ENCODE measurements at regions of chr16 and their contacts with region 1.

Region 1: GRCh38 chr16:21554795-21555585 is 44.4 kb upstream of the METTL9 start:
- DNase-seq: peak; percentile 78 to 87
- H3K4me3 ChIP-seq: no peak overlapping the region
- H3K27ac ChIP-seq: no peak overlapping the region
- H3K4me1 ChIP-seq: peaks cover 0 to 8% of the 10 kb centered on the region in 2 donors
- H3K27me3 ChIP-seq: no peaks in the 10 kb centered on the region
- CTCF ChIP-seq: peak; percentile 91 to 100 (median 98)
- POLR2A ChIP-seq: no peak

Region 2: DNA sequence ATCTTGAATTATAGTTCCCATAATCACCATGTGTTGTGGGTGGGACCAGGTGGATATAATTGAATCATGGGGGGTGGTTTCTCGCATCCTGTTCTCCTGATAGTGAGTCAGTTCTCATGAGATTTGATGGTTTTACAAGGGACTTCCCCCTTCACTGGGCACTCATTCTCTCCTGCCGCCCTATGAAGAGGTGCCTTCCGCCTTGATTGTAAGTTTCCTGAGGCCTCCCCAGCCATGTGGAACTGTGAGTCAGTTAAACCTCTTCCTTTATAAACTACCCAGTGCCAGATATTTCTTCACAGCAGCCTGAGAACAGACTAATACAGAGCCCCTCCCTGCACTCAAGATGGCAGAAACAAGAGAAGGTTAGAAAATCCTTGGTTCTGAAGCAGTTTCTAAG is 370.2 kb before region 1 on chr16:
- intact Hi-C with region 1: loop called (anchors 5 kb)
- DNase-seq: no peak
- H3K4me3 ChIP-seq: no peak overlapping the region
- H3K27ac ChIP-seq: no peak overlapping the region
- H3K4me1 ChIP-seq: no peaks in the 10 kb centered on the region
- H3K27me3 ChIP-seq: no peaks in the 10 kb centered on the region
- CTCF ChIP-seq: no peak
- POLR2A ChIP-seq: no peak

Region 3: GRCh38 chr16:21218153-21218552 is 336.8 kb before region 1 on chr16:
- intact Hi-C with region 1: no loop called
- DNase-seq: no peak
- H3K4me3 ChIP-seq: no peak overlapping the region
- H3K27ac ChIP-seq: no peak overlapping the region
- H3K4me1 ChIP-seq: no peaks in the 10 kb centered on the region
- H3K27me3 ChIP-seq: no peaks in the 10 kb centered on the region
- CTCF ChIP-seq: no peak
- POLR2A ChIP-seq: no peak